Activated B cell treated with CpG ODN at 0.5 μM for 24 hours (primary cell): ENCODE measurements at regions of chr1 and their contacts with region 1.

Region 1: GRCh38 chr1:206814716-206815341 is 42.5 kb upstream of the IL10 start:
- DNase-seq: no peak
- ATAC-seq: peak; percentile 69
- H3K4me3 Mint-ChIP-seq: peak overlapping the region; percentile 44
- H3K27ac Mint-ChIP-seq: peak overlapping the region; percentile 73
- H3K4me1 Mint-ChIP-seq: peaks cover 47% of the 10 kb centered on the region
- H3K27me3 Mint-ChIP-seq: no peaks in the 10 kb centered on the region
- CTCF ChIP-seq: no peak

Region 2: GRCh38 chr1:206540044-206540780 is 274.6 kb before region 1 on chr1:
- CTCF ChIA-PET with region 1: no interaction called
- POLR2A ChIA-PET with region 1: no interaction called
- intact Hi-C with region 1: no loop called
- DNase-seq: no peak
- ATAC-seq: no peak
- H3K4me3 Mint-ChIP-seq: no peak overlapping the region
- H3K27ac Mint-ChIP-seq: no peak overlapping the region
- H3K4me1 Mint-ChIP-seq: peaks cover 4% of the 10 kb centered on the region
- H3K27me3 Mint-ChIP-seq: no peaks in the 10 kb centered on the region
- CTCF ChIP-seq: no peak

Region 3: GRCh38 chr1:206693029-206693428 is 121.8 kb before region 1 on chr1:
- CTCF ChIA-PET with region 1: no interaction called
- POLR2A ChIA-PET with region 1: no interaction called
- intact Hi-C with region 1: no loop called
- DNase-seq: no peak
- ATAC-seq: no peak
- H3K4me3 Mint-ChIP-seq: no peak overlapping the region
- H3K27ac Mint-ChIP-seq: no peak overlapping the region
- H3K4me1 Mint-ChIP-seq: peaks cover 83% of the 10 kb centered on the region
- H3K27me3 Mint-ChIP-seq: no peaks in the 10 kb centered on the region
- CTCF ChIP-seq: no peak

Region 4: DNA sequence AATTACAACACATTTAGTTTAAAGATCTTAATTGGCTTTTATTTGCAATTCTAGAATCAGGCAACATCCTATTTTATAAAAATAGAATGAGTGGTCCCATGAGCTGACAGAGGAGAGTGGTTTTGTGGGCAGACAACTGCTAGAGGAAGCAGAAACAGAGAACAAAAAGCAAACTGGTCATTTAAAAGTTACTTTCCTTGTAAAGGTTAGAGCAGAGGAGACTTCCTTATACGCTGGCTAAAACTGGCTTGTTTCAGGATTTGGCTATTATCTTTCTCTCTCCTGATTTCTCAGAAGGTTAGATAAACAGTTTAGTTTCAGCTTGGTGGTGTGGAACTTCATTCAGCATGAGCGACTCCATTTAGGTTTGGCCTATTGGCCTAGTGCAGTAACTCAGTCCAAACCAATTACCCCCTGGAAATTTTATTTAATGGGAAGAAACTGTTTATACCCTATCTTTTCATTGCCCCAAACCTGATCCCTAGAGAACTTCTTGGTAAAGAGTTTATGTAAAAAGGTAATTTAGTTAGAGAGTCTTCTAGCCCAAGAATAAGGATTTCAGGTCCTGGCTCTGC is 18.4 kb after region 1 on chr1:
- CTCF ChIA-PET with region 1: interaction called, 4 read pairs
- POLR2A ChIA-PET with region 1: interaction called, 4 read pairs
- intact Hi-C with region 1: loop called (anchors 2 kb)
- DNase-seq: no peak
- ATAC-seq: no peak
- H3K4me3 Mint-ChIP-seq: no peak overlapping the region
- H3K27ac Mint-ChIP-seq: no peak overlapping the region
- H3K4me1 Mint-ChIP-seq: peaks cover 60% of the 10 kb centered on the region
- H3K27me3 Mint-ChIP-seq: no peaks in the 10 kb centered on the region
- CTCF ChIP-seq: no peak